Activated T-helper 1 cell treated with anti-CD3 and anti-CD28 coated beads, Interleukin-12 subunit alpha, Interleukin-12 subunit beta, Interleukin-2, Interleukin-4 antibody, amounts not matched to agents 30 ng/mL and 10 ng/mL and 1 ng/mL, durations not matched to agents 14 hours and 24 hours and 36 hours (primary cell): ENCODE measurements at regions of chr13 and their contacts with region 1.

Region 1: GRCh38 chr13:94327318-94327717 is 152.2 kb downstream of the DCT start:
- DNase-seq: peak; percentile 13
- H3K4me3 Mint-ChIP-seq: peak overlapping the region; percentile 24
- H3K27ac Mint-ChIP-seq: peak overlapping the region; percentile 75
- H3K4me1 Mint-ChIP-seq: peaks cover 82% of the 10 kb centered on the region
- H3K27me3 Mint-ChIP-seq: peaks cover 7% of the 10 kb centered on the region

Region 2: GRCh38 chr13:94210816-94211215 is 116.5 kb before region 1 on chr13:
- intact Hi-C with region 1: loop called (anchors 5 kb)
- DNase-seq: no peak
- H3K4me3 Mint-ChIP-seq: no peak overlapping the region
- H3K27ac Mint-ChIP-seq: no peak overlapping the region
- H3K4me1 Mint-ChIP-seq: no peaks in the 10 kb centered on the region
- H3K27me3 Mint-ChIP-seq: no peaks in the 10 kb centered on the region

Region 3: GRCh38 chr13:94345374-94346195 is 18.3 kb after region 1 on chr13:
- intact Hi-C with region 1: loop called (anchors 1 kb)
- DNase-seq: no peak
- H3K4me3 Mint-ChIP-seq: no peak overlapping the region
- H3K27ac Mint-ChIP-seq: no peak overlapping the region
- H3K4me1 Mint-ChIP-seq: peaks cover 28% of the 10 kb centered on the region
- H3K27me3 Mint-ChIP-seq: peaks cover 6% of the 10 kb centered on the region

Region 4: GRCh38 chr13:94549232-94550061 is 222.1 kb after region 1 on chr13:
- intact Hi-C with region 1: loop called (anchors 5 kb)
- DNase-seq: peak; percentile 87
- H3K4me3 Mint-ChIP-seq: peak overlapping the region; percentile 84
- H3K27ac Mint-ChIP-seq: peak overlapping the region; percentile 99
- H3K4me1 Mint-ChIP-seq: peaks cover 25% of the 10 kb centered on the region
- H3K27me3 Mint-ChIP-seq: peaks cover 15% of the 10 kb centered on the region

Region 5: GRCh38 chr13:94860981-94861407 is 533.7 kb after region 1 on chr13:
- intact Hi-C with region 1: no loop called
- DNase-seq: no peak
- H3K4me3 Mint-ChIP-seq: peak overlapping the region; percentile 78
- H3K27ac Mint-ChIP-seq: peak overlapping the region; percentile 45
- H3K4me1 Mint-ChIP-seq: peaks cover 8% of the 10 kb centered on the region
- H3K27me3 Mint-ChIP-seq: peaks cover 7% of the 10 kb centered on the region